Sciatic nerve (tissue), 2 donors: ENCODE measurements at regions of chr10 and their contacts with region 1.

Region 1: GRCh38 chr10:63164166-63164623 is 31.1 kb downstream of the NRBF2 start:
- DNase-seq: no peak
- ATAC-seq: peak; percentile 21

Region 2: DNA sequence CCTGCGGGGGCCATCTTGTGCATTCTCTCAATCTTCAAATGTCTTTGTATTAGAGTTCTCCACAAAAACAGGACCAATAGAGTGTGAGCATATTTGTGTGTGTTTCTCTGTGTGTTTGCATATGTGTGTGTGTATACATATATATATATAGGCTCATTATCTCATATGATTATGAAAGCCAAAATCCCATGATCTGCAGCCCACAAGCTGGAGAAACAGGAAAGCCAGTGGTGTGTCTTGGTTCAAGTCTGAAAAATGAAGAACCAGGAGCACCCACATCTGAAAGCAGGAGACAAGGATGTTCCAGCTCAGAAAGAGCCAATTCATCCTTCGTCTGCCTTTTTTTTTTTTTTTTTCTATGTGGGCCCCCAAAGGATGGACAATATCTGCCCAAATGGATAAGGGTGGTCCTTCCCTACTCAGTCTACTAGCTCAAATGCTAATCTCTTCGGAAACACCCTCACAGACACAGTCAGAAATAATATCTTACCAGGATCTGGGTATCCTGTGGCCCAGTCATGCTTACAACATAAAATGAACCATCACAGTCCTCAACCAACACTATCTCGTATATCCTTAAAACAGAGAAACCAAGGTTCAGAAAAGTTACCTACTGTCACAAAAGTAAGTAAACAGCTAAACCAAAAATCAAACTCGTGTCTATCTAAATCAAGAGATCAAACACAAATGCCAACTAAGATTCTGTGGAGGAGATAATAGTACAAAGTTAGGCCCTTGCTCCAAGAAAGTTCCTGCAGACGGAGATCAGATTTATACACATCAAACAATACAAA is 159.7 kb after region 1 on chr10:
- intact Hi-C with region 1: no loop called
- DNase-seq: no peak
- ATAC-seq: no peak

Region 3: DNA sequence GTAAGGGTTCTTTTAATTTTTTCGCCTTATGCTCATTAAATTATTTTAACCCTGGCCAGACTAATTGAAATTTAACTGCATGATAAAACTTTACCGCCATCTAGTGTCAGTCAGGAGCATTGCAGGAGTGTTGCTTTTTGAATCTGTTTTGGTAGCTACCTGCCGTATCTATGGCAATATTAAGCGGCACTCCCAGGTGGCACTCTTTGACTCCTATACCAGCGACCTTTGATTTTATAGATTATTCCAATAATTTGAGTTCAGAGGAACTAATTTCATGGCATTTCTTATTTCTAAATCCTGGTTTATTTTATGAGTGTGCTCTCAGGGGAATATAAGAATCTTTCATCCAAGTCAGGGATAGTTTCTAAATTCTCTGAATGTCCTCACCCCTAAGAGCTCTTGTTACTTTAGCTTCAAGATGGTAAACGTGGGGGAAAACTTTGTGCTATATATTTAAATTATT is 555.9 kb after region 1 on chr10:
- intact Hi-C with region 1: loop called (anchors 5 kb)
- DNase-seq: no peak
- ATAC-seq: peak; percentile 27